ENCODE measurements at regions of chr9 and their contacts with region 1.

Region 1: GRCh38 chr9:34637356-34638137 is at the start of gene SIGMAR1:
- DNase-seq: peak; percentile 85 to 95 (median 92)
- ATAC-seq: peak; percentile 92
- H3K4me3 ChIP-seq: peak within 1 kb of the TSS; percentile 86
- H3K4me3 Mint-ChIP-seq: peak within 1 kb of the TSS; percentile 89
- H3K27ac ChIP-seq: peak within 1 kb of the TSS; percentile 72 to 84
- H3K27ac Mint-ChIP-seq: peak within 1 kb of the TSS; percentile 89
- H3K4me1 ChIP-seq: peaks cover 41% of the 10 kb centered on the region
- H3K4me1 Mint-ChIP-seq: peaks cover 45% of the 10 kb centered on the region
- H3K27me3 ChIP-seq: no peaks in the 10 kb centered on the region
- H3K27me3 Mint-ChIP-seq: no peaks in the 10 kb centered on the region
- CTCF ChIP-seq: no peak
- total RNA-seq, gene SIGMAR1: 11.7 to 12.1 TPM

Region 2: DNA sequence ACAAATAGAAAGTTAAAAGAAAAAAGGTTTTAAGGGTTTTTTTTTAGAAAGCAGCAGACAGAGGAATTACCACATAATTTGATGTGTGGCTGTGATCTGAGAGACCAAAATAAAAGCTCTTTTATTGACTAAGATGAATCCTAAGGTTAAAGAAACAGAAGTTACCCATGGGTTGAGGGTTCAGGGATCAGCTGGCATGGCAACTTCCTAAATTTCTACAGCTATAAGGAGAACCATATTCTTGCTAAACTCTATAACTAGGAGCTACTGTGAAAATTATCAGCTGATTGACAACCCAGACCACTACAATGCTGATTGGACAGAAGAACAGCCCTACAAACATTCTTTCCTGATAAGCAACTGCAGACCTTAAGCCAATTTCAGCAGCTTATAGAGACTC is 1814.0 kb before region 1 on chr9:
- CTCF ChIA-PET with region 1: no interaction called
- POLR2A ChIA-PET with region 1: no interaction called
- intact Hi-C with region 1: no loop called
- DNase-seq: no peak
- ATAC-seq: no peak
- H3K4me3 ChIP-seq: no peak overlapping the region
- H3K4me3 Mint-ChIP-seq: no peak overlapping the region
- H3K27ac ChIP-seq: no peak overlapping the region
- H3K27ac Mint-ChIP-seq: no peak overlapping the region
- H3K4me1 ChIP-seq: no peaks in the 10 kb centered on the region
- H3K4me1 Mint-ChIP-seq: no peaks in the 10 kb centered on the region
- H3K27me3 ChIP-seq: peaks cover 0 to 9% of the 10 kb centered on the region in 2 experiments
- H3K27me3 Mint-ChIP-seq: peaks cover 48% of the 10 kb centered on the region
- CTCF ChIP-seq: no peak

Region 3: GRCh38 chr9:34437006-34437925 is 200.3 kb before region 1 on chr9:
- CTCF ChIA-PET with region 1: no interaction called
- POLR2A ChIA-PET with region 1: no interaction called
- intact Hi-C with region 1: loop called in 1 of 2 experiments (anchors 1 kb)
- DNase-seq: peak; percentile 34 to 87 (median 51)
- ATAC-seq: peak; percentile 95
- H3K4me3 ChIP-seq: no peak overlapping the region
- H3K4me3 Mint-ChIP-seq: no peak overlapping the region
- H3K27ac ChIP-seq: no peak overlapping the region
- H3K27ac Mint-ChIP-seq: no peak overlapping the region
- H3K4me1 ChIP-seq: peaks cover 9% of the 10 kb centered on the region
- H3K4me1 Mint-ChIP-seq: peaks cover 22% of the 10 kb centered on the region
- H3K27me3 ChIP-seq: no peaks in the 10 kb centered on the region
- H3K27me3 Mint-ChIP-seq: no peaks in the 10 kb centered on the region
- CTCF ChIP-seq: peak; percentile 69

Region 4: GRCh38 chr9:34578241-34579103 is 59.1 kb before region 1 on chr9:
- CTCF ChIA-PET with region 1: no interaction called
- POLR2A ChIA-PET with region 1: no interaction called
- intact Hi-C with region 1: no loop called
- DNase-seq: peak in 2 of 14 experiments; percentile 23 to 28
- ATAC-seq: peak; percentile 49
- H3K4me3 ChIP-seq: no peak overlapping the region
- H3K4me3 Mint-ChIP-seq: no peak overlapping the region
- H3K27ac ChIP-seq: no peak overlapping the region
- H3K27ac Mint-ChIP-seq: no peak overlapping the region
- H3K4me1 ChIP-seq: peaks cover 13% of the 10 kb centered on the region
- H3K4me1 Mint-ChIP-seq: peaks cover 10% of the 10 kb centered on the region
- H3K27me3 ChIP-seq: peaks cover 53 to 66% of the 10 kb centered on the region in 2 experiments
- H3K27me3 Mint-ChIP-seq: peaks cover 89% of the 10 kb centered on the region
- CTCF ChIP-seq: no peak

Region 5: DNA sequence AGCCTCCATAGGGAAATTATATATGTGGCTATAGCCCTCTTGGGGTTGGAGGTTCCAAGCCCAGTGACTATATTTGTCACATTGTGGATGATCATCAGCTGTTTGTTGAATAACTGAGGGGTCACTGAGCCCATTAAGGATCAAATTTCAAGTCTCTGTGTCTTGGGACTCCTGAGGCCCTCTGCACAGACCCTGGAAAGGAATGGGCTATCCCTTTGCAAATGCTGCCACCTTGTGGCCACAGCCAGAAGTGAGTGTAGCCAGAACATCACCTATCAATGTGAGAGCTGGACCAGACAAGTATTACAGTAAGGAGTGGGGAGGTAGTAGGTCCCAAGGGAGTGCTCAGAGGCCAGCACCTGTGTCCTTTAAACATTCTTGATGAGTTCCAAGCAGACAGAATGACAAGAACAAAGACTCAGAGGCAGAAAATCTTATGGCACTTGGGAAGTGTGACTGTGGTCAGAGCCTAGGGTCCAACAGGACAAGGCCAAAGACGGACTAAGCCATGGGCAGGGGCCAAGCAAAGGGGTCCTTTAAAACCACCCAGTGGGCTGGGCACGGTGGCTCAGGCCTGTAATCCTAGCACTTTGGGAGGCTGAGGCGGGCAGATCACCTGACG is 33.8 kb before region 1 on chr9:
- CTCF ChIA-PET with region 1: interaction called, 13 read pairs
- POLR2A ChIA-PET with region 1: no interaction called
- intact Hi-C with region 1: no loop called
- DNase-seq: peak; percentile 70 to 87 (median 78)
- ATAC-seq: peak; percentile 98
- H3K4me3 ChIP-seq: no peak overlapping the region
- H3K4me3 Mint-ChIP-seq: no peak overlapping the region
- H3K27ac ChIP-seq: no peak overlapping the region
- H3K27ac Mint-ChIP-seq: no peak overlapping the region
- H3K4me1 ChIP-seq: no peaks in the 10 kb centered on the region
- H3K4me1 Mint-ChIP-seq: no peaks in the 10 kb centered on the region
- H3K27me3 ChIP-seq: no peaks in the 10 kb centered on the region
- H3K27me3 Mint-ChIP-seq: peaks cover 5% of the 10 kb centered on the region
- CTCF ChIP-seq: peak; percentile 94

Region 6: GRCh38 chr9:34620061-34620994 is 17.2 kb before region 1 on chr9 and contains the start of gene DCTN3:
- CTCF ChIA-PET with region 1: interaction called, 41 read pairs
- POLR2A ChIA-PET with region 1: interaction called, 46 read pairs
- intact Hi-C with region 1: no loop called
- DNase-seq: peak; percentile 78 to 97 (median 88)
- ATAC-seq: peak; percentile 97
- H3K4me3 ChIP-seq: peak within 1 kb of the TSS; percentile 86
- H3K4me3 Mint-ChIP-seq: peak within 1 kb of the TSS; percentile 96
- H3K27ac ChIP-seq: peak within 1 kb of the TSS; percentile 33
- H3K27ac Mint-ChIP-seq: peak within 1 kb of the TSS; percentile 61
- H3K4me1 ChIP-seq: peaks cover 36% of the 10 kb centered on the region
- H3K4me1 Mint-ChIP-seq: peaks cover 33% of the 10 kb centered on the region
- H3K27me3 ChIP-seq: peaks cover 36 to 37% of the 10 kb centered on the region in 2 experiments
- H3K27me3 Mint-ChIP-seq: peaks cover 49% of the 10 kb centered on the region
- CTCF ChIP-seq: no peak
- total RNA-seq, gene DCTN3: 81.5 to 84.4 TPM

Region 7: GRCh38 chr9:34701769-34702736 is 64.5 kb after region 1 on chr9:
- CTCF ChIA-PET with region 1: interaction called, 15 read pairs
- POLR2A ChIA-PET with region 1: interaction called, 3 read pairs
- intact Hi-C with region 1: loop called in 1 of 2 experiments (anchors 5 kb)
- DNase-seq: peak; percentile 70 to 88 (median 78)
- ATAC-seq: peak; percentile 82
- H3K4me3 ChIP-seq: peak overlapping the region; percentile 54
- H3K4me3 Mint-ChIP-seq: peak overlapping the region; percentile 87
- H3K27ac ChIP-seq: no peak overlapping the region
- H3K27ac Mint-ChIP-seq: no peak overlapping the region
- H3K4me1 ChIP-seq: peaks cover 12% of the 10 kb centered on the region
- H3K4me1 Mint-ChIP-seq: peaks cover 14% of the 10 kb centered on the region
- H3K27me3 ChIP-seq: no peaks in the 10 kb centered on the region
- H3K27me3 Mint-ChIP-seq: peaks cover 8% of the 10 kb centered on the region
- CTCF ChIP-seq: peak; percentile 85